Heart right ventricle (tissue), 16 donors: ENCODE measurements at regions of chrX and their contacts with region 1.

Region 1: DNA sequence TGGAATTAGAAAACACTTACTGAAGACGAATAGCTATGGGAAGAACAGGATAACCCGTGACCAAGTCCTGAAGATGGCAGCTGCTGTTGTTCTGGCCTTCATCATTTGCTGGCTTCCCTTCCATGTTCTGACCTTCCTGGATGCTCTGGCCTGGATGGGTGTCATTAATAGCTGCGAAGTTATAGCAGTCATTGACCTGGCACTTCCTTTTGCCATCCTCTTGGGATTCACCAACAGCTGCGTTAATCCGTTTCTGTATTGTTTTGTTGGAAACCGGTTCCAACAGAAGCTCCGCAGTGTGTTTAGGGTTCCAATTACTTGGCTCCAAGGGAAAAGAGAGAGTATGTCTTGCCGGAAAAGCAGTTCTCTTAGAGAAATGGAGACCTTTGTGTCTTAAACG is 2.4 kb downstream of the AGTR2 start:
- DNase-seq: no peak
- ATAC-seq: no peak
- H3K4me3 ChIP-seq: no peak overlapping the region
- H3K27ac ChIP-seq: no peak overlapping the region
- H3K4me1 ChIP-seq: no peaks in the 10 kb centered on the region
- H3K27me3 ChIP-seq: peaks cover 0 to 7% (median 0%) of the 10 kb centered on the region in 7 donors
- CTCF ChIP-seq: no peak

Region 2: GRCh38 chrX:116009861-116010710 is 162.9 kb before region 1 on chrX:
- intact Hi-C with region 1: no loop called
- DNase-seq: peak; percentile 5 to 7
- ATAC-seq: peak in 1 of 8 donors; percentile 61
- H3K4me3 ChIP-seq: no peak overlapping the region
- H3K27ac ChIP-seq: no peak overlapping the region
- H3K4me1 ChIP-seq: no peaks in the 10 kb centered on the region
- H3K27me3 ChIP-seq: peaks cover 0 to 74% (median 0%) of the 10 kb centered on the region in 7 donors
- CTCF ChIP-seq: no peak

Region 3: DNA sequence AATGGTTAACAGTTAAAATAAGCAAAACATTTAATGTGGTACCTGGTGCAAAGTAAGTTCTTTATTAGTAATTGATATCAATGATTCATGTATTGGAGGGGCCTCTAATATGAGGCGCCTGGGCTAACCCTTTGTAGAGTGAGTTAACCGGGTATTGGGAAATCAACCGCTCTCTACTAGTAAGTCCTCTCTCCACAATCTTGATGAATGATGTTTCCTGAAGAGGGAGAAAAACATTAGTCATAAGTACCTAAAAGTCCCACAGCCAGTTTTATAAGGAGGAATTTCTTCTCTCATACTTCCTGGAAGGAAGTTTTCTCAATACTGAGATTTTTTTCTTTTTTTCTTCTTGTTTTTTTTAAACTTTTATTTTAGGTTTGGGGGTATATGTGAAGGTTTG is 59.8 kb after region 1 on chrX:
- intact Hi-C with region 1: loop called in 1 of 10 experiments (anchors 2 kb)
- DNase-seq: no peak
- ATAC-seq: no peak
- H3K4me3 ChIP-seq: no peak overlapping the region
- H3K27ac ChIP-seq: no peak overlapping the region
- H3K4me1 ChIP-seq: no peaks in the 10 kb centered on the region
- H3K27me3 ChIP-seq: no peaks in the 10 kb centered on the region
- CTCF ChIP-seq: no peak